HepG2 (cell line): ENCODE measurements at regions of chr17 and their contacts with region 1.

Region 1: DNA sequence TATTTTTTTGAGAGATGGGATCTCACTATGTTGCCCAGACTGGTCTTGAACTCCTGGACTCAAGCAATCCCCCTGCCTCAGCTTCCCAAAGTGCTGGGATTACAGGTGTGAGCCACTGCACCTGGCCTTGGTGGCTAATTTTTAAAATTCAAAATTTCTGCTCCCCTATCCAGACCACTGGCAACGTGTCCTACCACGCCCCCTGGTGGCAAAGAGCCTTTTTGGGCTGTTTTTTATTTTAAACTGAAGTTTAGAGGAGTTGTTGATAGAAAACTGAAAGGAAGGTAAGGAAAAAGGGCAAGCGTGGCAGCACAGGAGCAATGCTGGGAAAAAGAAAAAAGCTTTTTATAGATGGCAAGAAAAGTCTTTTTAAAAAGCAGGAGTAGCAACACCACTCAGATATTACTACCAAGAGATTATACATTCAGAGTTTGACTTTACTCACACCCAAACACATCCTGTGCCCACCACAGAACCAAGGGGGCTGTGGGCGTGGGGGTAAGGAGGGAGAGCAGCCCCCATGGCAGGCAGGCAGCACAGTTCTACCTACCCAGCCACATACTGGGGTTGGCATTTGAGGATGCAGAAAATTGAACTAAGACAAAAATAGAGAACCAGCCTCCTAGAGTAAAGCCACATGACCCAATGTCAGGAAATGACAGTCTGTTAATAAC is 4.2 kb upstream of the MXRA7 start:
- DNase-seq: no peak
- ATAC-seq: peak; percentile 14; the same call in 2 of the 3 replicates
- H3K4me3 ChIP-seq: no peak overlapping the region
- H3K27ac ChIP-seq: no peak overlapping the region
- H3K4me1 ChIP-seq: peaks cover 22% of the 10 kb centered on the region
- H3K27me3 ChIP-seq: no peaks in the 10 kb centered on the region
- CTCF ChIP-seq: peak; percentile 84
- EP300 ChIP-seq: no peak
- POLR2A ChIP-seq: no peak
- RAD21 ChIP-seq: peak; percentile 59; the same call in 1 of the 2 replicates

Region 2: DNA sequence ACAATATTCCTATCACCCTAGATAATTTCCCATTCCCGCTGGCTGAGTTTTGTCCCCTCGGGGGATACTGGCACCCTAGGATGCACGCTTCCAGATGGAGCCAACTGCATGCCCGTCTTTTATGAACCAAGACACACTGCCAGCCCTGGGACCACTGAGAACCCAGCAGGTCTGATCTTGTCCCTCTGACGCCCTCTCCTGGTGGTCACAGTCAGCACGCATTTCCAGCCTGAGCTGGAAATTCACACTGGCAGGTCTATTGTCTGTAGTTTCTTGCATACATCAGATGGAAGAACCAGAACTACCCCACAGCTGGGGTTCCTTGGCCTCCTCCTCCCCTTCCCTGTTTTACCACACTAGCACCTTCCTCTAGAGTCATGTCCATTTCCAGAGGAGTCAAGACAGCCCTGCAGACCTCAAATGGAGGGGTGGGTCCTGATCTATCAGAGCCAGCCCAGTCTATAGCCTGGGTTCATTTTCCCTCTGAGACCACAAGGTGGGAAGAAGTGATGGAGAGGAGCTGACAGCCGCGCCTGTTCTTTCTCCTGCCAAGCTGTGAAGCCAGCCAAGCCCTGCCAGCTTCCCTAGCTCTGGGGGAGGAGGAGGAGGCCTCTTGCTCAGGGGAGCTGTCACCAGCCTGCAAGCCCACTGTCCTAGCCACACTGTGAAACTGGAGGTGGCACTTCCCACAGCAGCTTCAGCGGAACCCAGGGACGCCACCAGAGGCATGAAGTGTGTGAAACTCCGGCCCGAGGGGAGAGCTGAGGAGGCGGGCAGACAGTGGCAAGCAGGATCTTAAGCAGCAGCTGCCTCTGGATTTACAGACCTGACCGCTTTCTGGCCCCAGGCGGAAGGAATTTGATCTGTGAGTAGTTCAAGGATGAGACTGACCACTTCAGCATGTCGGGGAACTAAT is 33.5 kb before region 1 on chr17:
- CTCF ChIA-PET with region 1: interaction called, 17 read pairs
- POLR2A ChIA-PET with region 1: no interaction called
- in situ Hi-C with region 1: loop called (anchors 5 kb)
- intact Hi-C with region 1: no loop called
- DNase-seq: peak; percentile 58
- ATAC-seq: peak; percentile 56
- H3K4me3 ChIP-seq: no peak overlapping the region
- H3K27ac ChIP-seq: no peak overlapping the region
- H3K4me1 ChIP-seq: peaks cover 26% of the 10 kb centered on the region
- H3K27me3 ChIP-seq: no peaks in the 10 kb centered on the region
- CTCF ChIP-seq: peak; percentile 94
- EP300 ChIP-seq: no peak
- POLR2A ChIP-seq: no peak
- RAD21 ChIP-seq: peak; percentile 85